Activated T-helper 2 cell treated with anti-CD3 and anti-CD28 coated beads, Interferon-gamma antibody, Interleukin-2, Interleukin-4, amounts not matched to agents 10 μg/mL and 5 μg/mL and 100 μg/mL, durations not matched to agents 14 hours and 24 hours and 36 hours (primary cell): ENCODE measurements at regions of chr10 and their contacts with region 1.

Region 1: GRCh38 chr10:128125944-128126764 is at the start of gene MKI67:
- DNase-seq: peak; percentile 89
- H3K4me3 Mint-ChIP-seq: peak within 1 kb of the TSS; percentile 97
- H3K27ac Mint-ChIP-seq: peak within 1 kb of the TSS; percentile 91
- H3K4me1 Mint-ChIP-seq: peaks cover 39% of the 10 kb centered on the region
- H3K27me3 Mint-ChIP-seq: peaks cover 4% of the 10 kb centered on the region
- total RNA-seq, gene MKI67: 163 and 165 TPM in 2 replicates

Region 2: GRCh38 chr10:128047351-128047750 is 78.8 kb before region 1 on chr10:
- intact Hi-C with region 1: loop called (anchors 5 kb)
- DNase-seq: peak; percentile 83
- H3K4me3 Mint-ChIP-seq: peak overlapping the region; percentile 82
- H3K27ac Mint-ChIP-seq: peak overlapping the region; percentile 88
- H3K4me1 Mint-ChIP-seq: peaks cover 43% of the 10 kb centered on the region
- H3K27me3 Mint-ChIP-seq: no peaks in the 10 kb centered on the region

Region 3: GRCh38 chr10:128064108-128064969 is 61.8 kb before region 1 on chr10:
- intact Hi-C with region 1: loop called (anchors 1 kb)
- DNase-seq: peak; percentile 51
- H3K4me3 Mint-ChIP-seq: peak overlapping the region; percentile 68
- H3K27ac Mint-ChIP-seq: peak overlapping the region; percentile 93
- H3K4me1 Mint-ChIP-seq: peaks cover 60% of the 10 kb centered on the region
- H3K27me3 Mint-ChIP-seq: no peaks in the 10 kb centered on the region

Region 4: DNA sequence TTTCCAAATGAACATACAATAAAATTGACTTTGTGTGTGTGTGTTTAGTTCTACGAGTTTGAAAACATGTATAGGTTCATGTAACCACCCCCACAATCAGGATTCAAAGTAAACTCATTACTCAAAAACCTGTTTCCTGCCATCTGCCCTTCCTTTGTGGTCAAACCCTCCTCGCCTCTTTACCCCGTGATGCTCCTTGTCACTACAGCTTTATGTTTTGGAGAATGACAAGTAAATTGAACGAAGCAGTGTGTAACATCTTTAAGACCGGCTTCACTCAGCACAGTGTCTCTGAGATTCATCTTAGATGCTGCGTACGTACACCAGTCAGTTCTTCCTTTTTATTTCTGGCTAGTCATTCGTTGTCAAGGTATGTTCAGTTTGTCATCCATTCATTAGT is 54.7 kb after region 1 on chr10:
- intact Hi-C with region 1: loop called (anchors 2 kb)
- DNase-seq: peak; percentile 63
- H3K4me3 Mint-ChIP-seq: peak overlapping the region; percentile 66
- H3K27ac Mint-ChIP-seq: peak overlapping the region; percentile 69
- H3K4me1 Mint-ChIP-seq: peaks cover 36% of the 10 kb centered on the region
- H3K27me3 Mint-ChIP-seq: peaks cover 18% of the 10 kb centered on the region